ENCODE measurements at regions of chr6 and their contacts with region 1.

Region 1: DNA sequence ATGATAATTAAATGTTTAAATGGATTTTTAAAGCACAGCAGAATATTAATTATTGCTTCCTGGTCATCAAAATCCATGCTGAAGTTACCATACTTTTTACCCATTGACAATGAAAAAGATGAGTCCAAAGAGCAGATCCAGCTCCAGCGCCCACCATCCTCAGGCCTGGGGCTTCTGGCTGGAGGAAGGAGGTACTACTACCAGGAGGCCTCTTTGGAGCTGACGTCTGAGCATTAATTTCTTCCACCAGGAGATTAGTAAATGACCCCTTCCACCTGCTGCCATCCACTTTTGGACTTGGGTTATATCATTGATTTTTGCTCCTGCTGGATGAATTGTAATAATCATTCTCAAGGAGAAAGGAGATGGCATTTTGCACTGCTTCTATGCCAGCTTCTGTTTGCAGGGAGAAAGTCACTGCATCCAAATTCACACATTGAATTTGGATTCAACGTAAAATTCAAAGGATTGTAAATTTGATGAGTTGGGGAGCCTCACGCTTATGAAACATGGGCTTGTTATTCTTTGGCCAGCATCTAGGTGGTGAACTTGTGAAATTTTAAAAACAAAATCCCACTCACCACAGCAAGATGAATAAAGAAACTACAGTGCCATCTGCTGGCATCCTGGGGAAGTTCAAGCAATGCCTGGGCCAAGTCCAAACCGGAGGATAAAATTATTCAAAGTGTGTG is 121.8 kb downstream of the SASH1 start:
- DNase-seq: peak; percentile 94
- H3K4me3 ChIP-seq: no peak overlapping the region
- H3K27ac ChIP-seq: peak overlapping the region in 1 of 4 donors; percentile 47
- H3K4me1 ChIP-seq: peaks cover 32 to 56% (median 53%) of the 10 kb centered on the region in 4 donors
- H3K27me3 ChIP-seq: no peaks in the 10 kb centered on the region
- CTCF ChIP-seq: peak; percentile 96 to 97 (median 96)
- EP300 ChIP-seq: no peak
- POLR2A ChIP-seq: no peak

Region 2: GRCh38 chr6:147506704-147507114 is 957.8 kb before region 1 on chr6:
- intact Hi-C with region 1: loop called (anchors 10 kb)
- DNase-seq: no peak
- H3K4me3 ChIP-seq: peak overlapping the region; percentile 58 to 68 (median 60)
- H3K27ac ChIP-seq: no peak overlapping the region
- H3K4me1 ChIP-seq: peaks cover 13 to 33% (median 31%) of the 10 kb centered on the region in 4 donors
- H3K27me3 ChIP-seq: peaks cover 0 to 94% (median 19%) of the 10 kb centered on the region in 4 donors
- CTCF ChIP-seq: peak; percentile 65 to 86 (median 77)
- EP300 ChIP-seq: no peak
- POLR2A ChIP-seq: no peak

Region 3: DNA sequence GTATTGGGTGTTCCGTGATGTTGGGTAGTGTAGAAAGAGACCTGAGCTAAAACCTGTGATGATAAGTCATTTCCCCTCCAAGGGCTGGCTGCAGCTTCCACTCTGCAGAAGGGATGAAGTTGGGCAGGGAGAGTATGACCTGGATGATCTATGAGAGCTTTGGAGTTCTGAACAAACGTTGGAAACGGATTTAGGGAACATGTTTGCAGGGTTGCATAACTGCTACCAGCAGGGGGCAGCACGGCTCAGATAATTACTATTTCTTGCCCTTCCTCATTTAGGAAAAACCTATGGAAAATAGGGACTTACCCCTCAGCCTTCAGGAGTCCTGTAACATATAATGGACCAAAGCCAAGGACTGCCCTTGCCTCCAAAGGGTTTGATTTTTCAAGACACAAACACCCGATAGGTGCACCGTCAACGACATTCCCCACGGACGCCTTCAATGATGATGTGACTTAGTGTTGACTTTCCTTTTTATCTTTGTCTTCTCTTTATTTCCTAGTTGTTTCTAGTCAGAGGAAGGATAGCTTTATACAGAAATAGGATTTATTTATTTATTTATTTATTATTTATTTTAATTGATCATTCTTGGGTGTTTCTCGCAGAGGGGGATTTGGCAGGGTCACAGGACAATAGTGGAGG is 286.8 kb before region 1 on chr6:
- intact Hi-C with region 1: loop called (anchors 2 kb)
- DNase-seq: no peak
- H3K4me3 ChIP-seq: no peak overlapping the region
- H3K27ac ChIP-seq: no peak overlapping the region
- H3K4me1 ChIP-seq: no peaks in the 10 kb centered on the region
- H3K27me3 ChIP-seq: no peaks in the 10 kb centered on the region
- CTCF ChIP-seq: peak; percentile 72 to 86 (median 85)
- EP300 ChIP-seq: no peak
- POLR2A ChIP-seq: no peak

Region 4: GRCh38 chr6:148250975-148251685 is 213.3 kb before region 1 on chr6:
- intact Hi-C with region 1: loop called (anchors 5 kb)
- DNase-seq: no peak
- H3K4me3 ChIP-seq: no peak overlapping the region
- H3K27ac ChIP-seq: no peak overlapping the region
- H3K4me1 ChIP-seq: no peaks in the 10 kb centered on the region
- H3K27me3 ChIP-seq: no peaks in the 10 kb centered on the region
- CTCF ChIP-seq: peak; percentile 32 to 44 (median 35)
- EP300 ChIP-seq: no peak
- POLR2A ChIP-seq: no peak

Region 5: GRCh38 chr6:148265054-148265453 is 199.4 kb before region 1 on chr6:
- intact Hi-C with region 1: loop called (anchors 5 kb)
- DNase-seq: no peak
- H3K4me3 ChIP-seq: no peak overlapping the region
- H3K27ac ChIP-seq: no peak overlapping the region
- H3K4me1 ChIP-seq: peaks cover 10 to 13% (median 13%) of the 10 kb centered on the region in 4 donors
- H3K27me3 ChIP-seq: no peaks in the 10 kb centered on the region
- CTCF ChIP-seq: no peak
- EP300 ChIP-seq: no peak
- POLR2A ChIP-seq: no peak

Region 6: DNA sequence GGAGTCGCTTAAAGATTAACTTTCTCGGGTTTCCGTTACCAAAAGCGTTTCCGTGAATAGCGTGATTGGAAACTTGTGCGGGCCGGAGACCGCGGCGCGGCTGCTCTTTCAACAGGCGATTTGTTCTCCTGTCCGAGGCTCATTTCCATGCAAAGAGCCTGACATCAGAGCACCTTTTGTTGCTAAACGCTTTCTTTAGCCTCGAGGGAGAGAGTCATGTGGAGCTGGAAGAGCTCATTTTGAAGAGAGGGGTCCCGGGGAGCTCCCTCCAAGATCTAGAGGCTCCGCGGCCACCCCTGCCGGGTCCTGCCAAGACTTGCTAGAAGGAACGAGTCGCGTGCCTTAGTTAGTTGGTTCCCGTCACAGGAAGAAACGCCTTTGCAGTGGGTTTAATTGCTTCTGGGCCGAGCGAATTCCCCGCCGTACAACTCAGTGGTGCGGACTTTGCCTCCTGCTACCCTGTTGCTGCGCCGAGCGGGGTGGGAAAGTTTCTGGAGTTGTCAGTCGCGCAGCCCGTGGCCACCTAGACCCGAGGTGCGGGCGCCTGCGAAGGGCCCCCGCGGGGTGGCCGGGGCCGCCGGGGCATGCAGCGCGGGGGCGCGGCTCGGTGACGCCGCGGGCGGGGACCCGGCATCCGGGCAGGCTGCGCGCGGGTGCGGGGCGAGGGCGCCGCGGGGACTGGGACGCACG is 122.0 kb before region 1 on chr6 and contains the start of gene SASH1:
- intact Hi-C with region 1: loop called (anchors 5 kb)
- DNase-seq: peak; percentile 92
- H3K4me3 ChIP-seq: peak within 1 kb of the TSS; percentile 71 to 78 (median 77)
- H3K27ac ChIP-seq: peak within 1 kb of the TSS; percentile 76 to 88 (median 87)
- H3K4me1 ChIP-seq: peaks cover 25 to 41% (median 38%) of the 10 kb centered on the region in 4 donors
- H3K27me3 ChIP-seq: no peaks in the 10 kb centered on the region
- CTCF ChIP-seq: no peak
- EP300 ChIP-seq: no peak
- POLR2A ChIP-seq: no peak
- total RNA-seq, gene SASH1: 56.5 to 86.6 (median 70.3) TPM

Region 7: DNA sequence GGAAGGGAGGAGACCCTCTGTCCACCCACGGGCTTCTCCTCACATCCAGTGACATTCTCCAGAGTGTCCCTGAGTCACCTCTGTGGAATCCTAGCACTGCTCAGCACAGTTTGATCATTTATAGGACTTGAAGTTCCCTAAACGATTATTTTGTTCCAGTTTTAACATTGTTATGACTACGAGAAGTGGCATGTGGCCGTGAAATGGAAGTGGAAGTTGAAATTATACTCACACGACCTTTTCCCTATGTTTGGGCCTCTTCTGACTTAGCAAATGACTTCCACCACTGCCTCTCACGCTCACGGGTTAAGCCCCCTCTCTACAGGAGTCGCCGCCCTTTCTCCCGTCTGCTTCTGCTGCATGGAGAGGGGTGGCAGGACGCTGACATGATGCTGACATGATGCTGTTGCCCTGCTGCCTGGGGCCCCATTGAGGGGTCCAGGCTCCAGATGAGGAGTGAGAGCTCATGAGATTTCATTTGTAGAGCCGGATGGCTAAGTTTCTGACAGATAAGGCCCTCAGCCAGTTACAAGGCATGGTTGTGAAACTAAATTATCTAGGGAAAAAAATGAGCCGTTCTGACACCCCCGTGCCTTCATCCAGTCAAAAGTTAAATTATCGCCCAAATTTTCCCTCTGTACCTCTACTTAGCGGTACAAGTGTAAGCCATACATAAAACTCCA is 128.8 kb after region 1 on chr6:
- intact Hi-C with region 1: no loop called
- DNase-seq: no peak
- H3K4me3 ChIP-seq: no peak overlapping the region
- H3K27ac ChIP-seq: peak overlapping the region; percentile 67 to 76 (median 73)
- H3K4me1 ChIP-seq: peaks cover 10 to 37% (median 27%) of the 10 kb centered on the region in 4 donors
- H3K27me3 ChIP-seq: no peaks in the 10 kb centered on the region
- CTCF ChIP-seq: no peak
- EP300 ChIP-seq: no peak
- POLR2A ChIP-seq: no peak